ENCODE measurements at regions of chr10 and their contacts with region 1.

Region 1: DNA sequence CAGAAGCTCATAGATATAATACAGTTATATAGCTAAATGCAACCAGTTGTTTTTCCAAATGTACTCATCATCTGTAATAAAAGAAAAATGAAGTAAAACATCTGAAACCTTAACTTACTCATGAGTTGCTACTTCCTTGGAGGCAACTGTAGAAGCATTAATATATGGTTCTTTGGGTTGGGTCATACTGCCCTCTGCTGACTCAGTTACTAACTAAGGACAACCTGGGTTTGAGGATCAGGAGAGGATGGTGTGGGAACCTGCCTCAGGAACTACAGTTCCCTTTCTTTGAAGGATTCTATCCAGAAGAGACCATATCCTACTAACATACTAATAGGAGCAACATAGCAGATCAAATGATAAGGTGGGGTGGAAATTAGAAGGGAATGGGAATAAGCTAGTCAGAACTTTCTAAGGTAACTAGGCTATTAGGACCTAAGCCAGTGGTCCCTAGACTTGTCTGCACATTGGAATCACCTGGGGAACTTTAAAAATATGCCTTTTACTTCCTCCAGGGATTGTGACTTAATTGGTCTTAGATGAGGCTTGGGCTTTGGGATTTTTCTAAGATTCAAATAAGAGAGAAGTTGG is 20.7 kb downstream of the COX15 start:
- DNase-seq: no peak
- H3K4me3 ChIP-seq: no peak overlapping the region
- H3K27ac ChIP-seq: no peak overlapping the region
- H3K4me1 ChIP-seq: peaks cover 0 to 31% (median 24%) of the 10 kb centered on the region in 4 donors
- H3K27me3 ChIP-seq: no peaks in the 10 kb centered on the region
- CTCF ChIP-seq: peak; percentile 33 to 43 (median 34)
- EP300 ChIP-seq: no peak
- POLR2A ChIP-seq: no peak

Region 2: DNA sequence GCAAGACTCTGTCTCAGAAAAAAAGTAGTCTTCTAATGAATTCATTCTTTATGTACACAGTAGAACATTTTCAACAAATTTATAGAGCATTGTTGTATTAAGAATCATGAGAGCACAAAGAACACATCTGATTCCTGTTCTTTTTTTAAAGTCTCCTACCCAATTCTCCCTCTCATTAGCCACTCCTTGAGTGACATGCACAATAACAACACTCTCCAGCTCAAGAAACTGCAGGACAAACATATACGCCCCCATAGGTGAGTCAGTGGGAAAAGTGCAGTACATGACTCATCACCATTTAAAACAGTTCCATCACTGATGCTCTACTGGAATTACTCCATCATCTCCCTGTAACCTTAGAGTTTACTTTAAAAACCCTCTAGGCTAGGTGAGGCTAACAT is 570.2 kb before region 1 on chr10:
- intact Hi-C with region 1: no loop called
- DNase-seq: no peak
- H3K4me3 ChIP-seq: peak overlapping the region in 1 of 4 donors; percentile 18
- H3K27ac ChIP-seq: peak overlapping the region; percentile 73 to 83 (median 79)
- H3K4me1 ChIP-seq: peaks cover 0 to 45% (median 32%) of the 10 kb centered on the region in 4 donors
- H3K27me3 ChIP-seq: no peaks in the 10 kb centered on the region
- CTCF ChIP-seq: no peak
- EP300 ChIP-seq: no peak
- POLR2A ChIP-seq: no peak

Region 3: DNA sequence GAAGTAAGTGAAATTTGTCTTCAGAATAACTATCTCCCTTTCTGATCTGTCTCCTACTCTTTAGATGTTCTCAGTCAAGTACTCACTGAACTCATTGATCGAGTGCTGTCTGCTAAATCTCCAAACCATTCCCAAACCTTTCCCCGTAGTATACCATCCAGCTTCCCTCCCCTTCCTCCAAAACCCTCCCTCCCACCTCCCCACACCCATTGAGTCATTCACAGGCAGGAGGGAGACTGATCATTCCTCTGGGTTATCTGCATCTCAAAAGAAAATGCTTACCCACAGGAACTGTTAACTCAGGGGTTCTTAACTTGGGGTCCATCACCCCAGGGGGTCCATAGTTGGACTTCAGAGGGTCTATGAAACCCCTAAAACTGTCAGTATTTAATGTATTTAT is 318.2 kb before region 1 on chr10:
- intact Hi-C with region 1: loop called (anchors 2 kb)
- DNase-seq: no peak
- H3K4me3 ChIP-seq: no peak overlapping the region
- H3K27ac ChIP-seq: no peak overlapping the region
- H3K4me1 ChIP-seq: peaks cover 17 to 25% (median 23%) of the 10 kb centered on the region in 4 donors
- H3K27me3 ChIP-seq: no peaks in the 10 kb centered on the region
- CTCF ChIP-seq: no peak
- EP300 ChIP-seq: no peak
- POLR2A ChIP-seq: no peak

Region 4: GRCh38 chr10:99430451-99431189 is 280.6 kb before region 1 on chr10 and contains the start of gene GOT1:
- intact Hi-C with region 1: loop called (anchors 10 kb)
- DNase-seq: peak; percentile 99
- H3K4me3 ChIP-seq: peak within 1 kb of the TSS; percentile 82 to 83 (median 83)
- H3K27ac ChIP-seq: peak within 1 kb of the TSS; percentile 91 to 94 (median 92)
- H3K4me1 ChIP-seq: peaks cover 25 to 63% (median 58%) of the 10 kb centered on the region in 4 donors
- H3K27me3 ChIP-seq: no peaks in the 10 kb centered on the region
- CTCF ChIP-seq: peak in 1 of 3 experiments; percentile 26
- EP300 ChIP-seq: no peak
- POLR2A ChIP-seq: peak; percentile 83
- total RNA-seq, gene GOT1: 31.0 to 37.4 (median 36.0) TPM